PC-3 (cell line): ENCODE measurements at regions of chr15 and their contacts with region 1.

Region 1: GRCh38 chr15:36172955-36173354 is 406.5 kb upstream of the CDIN1 start:
- DNase-seq: peak; percentile 83
- ATAC-seq: peak; percentile 87
- H3K4me3 ChIP-seq: no peak overlapping the region
- H3K27ac ChIP-seq: no peak overlapping the region
- H3K4me1 ChIP-seq: peaks cover 18% of the 10 kb centered on the region
- H3K27me3 ChIP-seq: no peaks in the 10 kb centered on the region
- CTCF ChIP-seq: no peak

Region 2: DNA sequence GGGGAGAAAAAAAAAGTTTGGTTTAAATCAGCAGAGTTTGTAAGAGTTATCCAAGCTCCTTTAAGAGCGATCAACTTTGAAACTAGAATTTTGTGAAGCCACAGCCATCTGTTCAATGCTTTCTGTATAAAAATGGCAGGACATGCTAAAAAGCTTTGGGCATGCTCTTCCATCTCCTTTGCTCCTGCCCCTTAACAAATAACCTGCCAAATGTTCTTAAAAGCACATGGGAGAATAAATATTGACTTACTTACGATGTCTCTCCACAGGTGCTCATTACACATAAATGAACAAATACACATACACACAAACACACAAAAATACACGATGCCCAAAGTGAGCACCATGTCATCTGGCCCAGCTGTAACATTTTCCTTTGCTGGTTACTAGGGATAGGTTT is 415.2 kb before region 1 on chr15:
- CTCF ChIA-PET with region 1: no interaction called
- POLR2A ChIA-PET with region 1: no interaction called
- intact Hi-C with region 1: loop called (anchors 5 kb)
- DNase-seq: peak; percentile 33
- ATAC-seq: peak; percentile 28
- H3K4me3 ChIP-seq: no peak overlapping the region
- H3K27ac ChIP-seq: peak overlapping the region; percentile 13
- H3K4me1 ChIP-seq: peaks cover 46% of the 10 kb centered on the region
- H3K27me3 ChIP-seq: no peaks in the 10 kb centered on the region
- CTCF ChIP-seq: no peak

Region 3: GRCh38 chr15:36239509-36239908 is 66.6 kb after region 1 on chr15:
- CTCF ChIA-PET with region 1: no interaction called
- POLR2A ChIA-PET with region 1: no interaction called
- intact Hi-C with region 1: no loop called
- DNase-seq: no peak
- ATAC-seq: no peak
- H3K4me3 ChIP-seq: no peak overlapping the region
- H3K27ac ChIP-seq: no peak overlapping the region
- H3K4me1 ChIP-seq: no peaks in the 10 kb centered on the region
- H3K27me3 ChIP-seq: no peaks in the 10 kb centered on the region
- CTCF ChIP-seq: no peak

Region 4: DNA sequence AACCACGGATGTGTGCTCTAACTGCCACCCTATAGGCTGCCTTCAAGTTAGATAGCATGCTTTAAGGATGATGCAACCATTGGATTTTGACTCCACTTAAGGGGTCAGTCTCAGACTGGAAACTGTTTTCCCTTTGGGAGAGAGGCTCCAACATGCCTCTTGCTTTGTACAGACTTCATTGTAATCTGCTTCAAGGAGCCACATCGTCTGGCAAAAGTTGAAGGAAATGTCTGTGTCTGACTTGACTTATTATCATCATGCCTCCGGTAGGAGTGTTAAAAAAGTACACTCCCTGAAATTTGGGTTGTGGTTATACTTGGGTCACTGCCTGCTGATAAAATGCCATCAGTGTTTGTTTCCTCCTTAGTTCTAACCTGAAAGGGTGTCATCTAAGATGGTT is 161.1 kb after region 1 on chr15:
- CTCF ChIA-PET with region 1: no interaction called
- POLR2A ChIA-PET with region 1: no interaction called
- intact Hi-C with region 1: loop called (anchors 5 kb)
- DNase-seq: peak; percentile 58
- ATAC-seq: no peak; the same call in 1 of the 2 replicates
- H3K4me3 ChIP-seq: no peak overlapping the region
- H3K27ac ChIP-seq: peak overlapping the region; percentile 96
- H3K4me1 ChIP-seq: peaks cover 34% of the 10 kb centered on the region
- H3K27me3 ChIP-seq: no peaks in the 10 kb centered on the region
- CTCF ChIP-seq: no peak